Activated CD4-positive, alpha-beta T cell treated with anti-CD3 and anti-CD28 coated beads for 36 hours (primary cell): ENCODE measurements at regions of chr4 and their contacts with region 1.

Region 1: GRCh38 chr4:185471235-185472102 is at the start of gene CCDC110:
- DNase-seq: peak; percentile 98
- ATAC-seq: peak; percentile 97
- H3K4me3 Mint-ChIP-seq: peak within 1 kb of the TSS; percentile 82
- H3K27ac Mint-ChIP-seq: peak within 1 kb of the TSS; percentile 75
- H3K4me1 Mint-ChIP-seq: peaks cover 4% of the 10 kb centered on the region
- H3K27me3 Mint-ChIP-seq: peaks cover 9% of the 10 kb centered on the region
- total RNA-seq, gene CCDC110: 0.34 to 0.40 TPM

Region 2: GRCh38 chr4:183659029-183659871 is 1812.2 kb before region 1 on chr4 and contains the starts of genes RWDD4 and TRAPPC11:
- CTCF ChIA-PET with region 1: no interaction called
- POLR2A ChIA-PET with region 1: no interaction called
- intact Hi-C with region 1: loop called in 1 of 2 experiments (anchors 5 kb)
- DNase-seq: peak; percentile 97
- ATAC-seq: peak; percentile 100
- H3K4me3 Mint-ChIP-seq: peak within 1 kb of the TSS; percentile 97
- H3K27ac Mint-ChIP-seq: peak within 1 kb of the TSS; percentile 95
- H3K4me1 Mint-ChIP-seq: peaks cover 35% of the 10 kb centered on the region
- H3K27me3 Mint-ChIP-seq: no peaks in the 10 kb centered on the region
- total RNA-seq, gene RWDD4: 19.4 to 26.5 TPM
- total RNA-seq, gene TRAPPC11: 27.7 to 37.9 TPM

Region 3: GRCh38 chr4:184649026-184649970 is 822.2 kb before region 1 on chr4 and contains the starts of genes CASP3 and PRIMPOL:
- CTCF ChIA-PET with region 1: no interaction called
- POLR2A ChIA-PET with region 1: no interaction called
- intact Hi-C with region 1: loop called in 1 of 2 experiments (anchors 2 kb)
- DNase-seq: peak; percentile 98
- ATAC-seq: peak; percentile 88
- H3K4me3 Mint-ChIP-seq: peak within 1 kb of the TSS; percentile 94
- H3K27ac Mint-ChIP-seq: peak within 1 kb of the TSS; percentile 95
- H3K4me1 Mint-ChIP-seq: peaks cover 51% of the 10 kb centered on the region
- H3K27me3 Mint-ChIP-seq: no peaks in the 10 kb centered on the region
- total RNA-seq, gene CASP3: 44.3 to 65.7 TPM
- total RNA-seq, gene PRIMPOL: 20.4 to 24.3 TPM

Region 4: DNA sequence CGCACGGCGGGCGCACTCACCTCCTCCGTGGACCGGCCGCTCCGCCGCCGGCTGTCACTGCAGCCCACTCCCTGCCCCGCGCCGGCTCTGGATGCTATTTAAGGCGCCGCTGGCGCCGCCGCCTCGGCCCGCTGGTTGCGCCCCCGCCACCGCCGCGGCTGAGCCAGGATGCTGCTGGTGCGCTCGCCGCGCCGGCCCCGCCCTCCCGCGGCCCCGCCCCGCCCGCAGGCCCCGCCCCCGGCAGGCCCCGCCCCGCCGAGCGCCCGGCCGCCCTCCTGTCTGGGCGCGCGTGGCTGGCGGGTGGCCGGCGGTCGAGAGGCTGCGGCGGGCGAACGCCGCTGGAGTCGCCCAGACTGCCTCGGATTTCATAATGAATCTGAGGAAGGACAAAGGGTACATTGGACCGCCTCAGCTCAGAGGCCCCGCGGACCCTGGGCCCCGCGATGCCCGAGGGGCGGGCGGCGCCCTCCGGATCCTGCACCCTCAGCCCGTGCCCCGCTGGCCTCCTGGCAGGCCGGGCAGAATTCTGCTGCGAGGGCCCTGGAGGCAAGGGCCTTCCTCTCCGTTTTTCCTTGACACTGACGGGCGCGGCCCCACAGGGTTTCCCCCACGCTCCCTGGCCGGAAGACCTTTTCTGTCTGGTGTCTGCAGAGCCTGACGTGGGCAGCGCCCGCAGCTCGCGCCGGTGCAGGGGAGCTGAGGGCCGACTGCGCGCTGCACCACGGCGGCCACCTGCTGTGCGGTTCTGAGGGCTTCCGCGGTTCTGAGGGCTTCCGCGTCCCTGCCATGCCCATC is 645.4 kb before region 1 on chr4 and contains the start of gene ACSL1:
- CTCF ChIA-PET with region 1: no interaction called
- POLR2A ChIA-PET with region 1: no interaction called
- intact Hi-C with region 1: loop called in 1 of 2 experiments (anchors 2 kb)
- DNase-seq: peak; percentile 88
- ATAC-seq: peak; percentile 82
- H3K4me3 Mint-ChIP-seq: peak within 1 kb of the TSS; percentile 87
- H3K27ac Mint-ChIP-seq: peak within 1 kb of the TSS; percentile 89
- H3K4me1 Mint-ChIP-seq: peaks cover 34% of the 10 kb centered on the region
- H3K27me3 Mint-ChIP-seq: no peaks in the 10 kb centered on the region
- total RNA-seq, gene ACSL1: 17.1 to 17.2 TPM

Region 5: GRCh38 chr4:185209031-185209851 is 262.2 kb before region 1 on chr4 and contains the start of gene SNX25:
- CTCF ChIA-PET with region 1: no interaction called
- POLR2A ChIA-PET with region 1: no interaction called
- intact Hi-C with region 1: loop called (anchors 1 kb)
- DNase-seq: peak; percentile 93
- ATAC-seq: peak; percentile 90
- H3K4me3 Mint-ChIP-seq: peak within 1 kb of the TSS; percentile 89
- H3K27ac Mint-ChIP-seq: peak within 1 kb of the TSS; percentile 78
- H3K4me1 Mint-ChIP-seq: peaks cover 35% of the 10 kb centered on the region
- H3K27me3 Mint-ChIP-seq: peaks cover 2% of the 10 kb centered on the region
- total RNA-seq, gene SNX25: 14.8 to 15.0 TPM

Region 6: GRCh38 chr4:185587427-185588161 is 116.1 kb after region 1 on chr4:
- CTCF ChIA-PET with region 1: no interaction called
- POLR2A ChIA-PET with region 1: no interaction called
- intact Hi-C with region 1: loop called in 1 of 2 experiments (anchors 1 kb)
- DNase-seq: peak; percentile 90
- ATAC-seq: peak; percentile 99
- H3K4me3 Mint-ChIP-seq: peak overlapping the region; percentile 40
- H3K27ac Mint-ChIP-seq: peak overlapping the region; percentile 63
- H3K4me1 Mint-ChIP-seq: peaks cover 18% of the 10 kb centered on the region
- H3K27me3 Mint-ChIP-seq: peaks cover 47% of the 10 kb centered on the region

Region 7: DNA sequence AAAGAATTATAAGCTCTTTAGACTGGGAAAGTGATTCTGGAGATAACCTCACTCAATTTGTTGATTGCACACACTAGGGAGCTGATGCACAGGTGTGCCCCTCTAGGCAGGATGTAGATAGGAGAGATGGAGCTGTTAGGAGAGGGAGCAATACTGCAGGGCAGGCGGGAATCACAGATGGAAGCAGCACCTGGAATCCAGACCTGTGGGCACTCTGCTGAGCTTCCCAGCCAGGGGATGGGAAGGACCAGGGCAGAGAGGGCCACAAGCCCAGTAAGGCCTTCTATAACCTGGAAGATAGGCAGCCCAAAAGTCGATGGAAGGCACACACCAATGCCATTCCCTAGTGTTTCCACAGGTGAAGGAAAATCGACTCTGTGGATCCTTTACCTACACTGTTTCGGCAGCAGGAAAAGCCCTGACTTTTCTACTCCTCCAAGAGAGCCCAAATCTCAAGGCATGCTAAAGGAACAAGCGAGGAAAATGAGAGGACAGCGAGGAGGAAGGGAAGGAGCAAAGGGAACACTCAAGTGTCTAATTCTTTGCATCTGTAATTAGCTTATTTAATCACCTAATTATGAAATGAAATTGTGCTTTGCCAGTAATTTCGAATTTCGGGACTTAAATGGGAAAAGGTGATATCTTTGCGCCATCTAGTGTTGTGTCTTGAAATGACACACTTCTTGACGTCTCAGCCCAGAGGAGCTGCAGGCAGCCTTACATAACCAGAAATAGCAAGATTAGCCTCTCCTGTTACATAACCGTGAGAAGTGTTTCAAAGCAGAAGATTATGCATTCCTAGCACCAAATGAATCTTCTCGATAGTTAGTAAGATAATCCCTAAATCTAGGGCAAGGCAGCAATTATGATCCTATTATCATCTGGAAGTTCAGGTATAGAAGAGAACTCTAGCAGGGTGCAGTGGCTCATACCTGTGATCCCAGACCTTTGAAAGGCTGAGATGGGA is 566.5 kb after region 1 on chr4:
- CTCF ChIA-PET with region 1: no interaction called
- POLR2A ChIA-PET with region 1: no interaction called
- intact Hi-C with region 1: loop called in 1 of 2 experiments (anchors 1 kb)
- DNase-seq: peak; percentile 23
- ATAC-seq: no peak
- H3K4me3 Mint-ChIP-seq: no peak overlapping the region
- H3K27ac Mint-ChIP-seq: no peak overlapping the region
- H3K4me1 Mint-ChIP-seq: no peaks in the 10 kb centered on the region
- H3K27me3 Mint-ChIP-seq: peaks cover 17% of the 10 kb centered on the region